Heart left ventricle (tissue), 16 donors: ENCODE measurements at regions of chr11 and their contacts with region 1.

Region 1: DNA sequence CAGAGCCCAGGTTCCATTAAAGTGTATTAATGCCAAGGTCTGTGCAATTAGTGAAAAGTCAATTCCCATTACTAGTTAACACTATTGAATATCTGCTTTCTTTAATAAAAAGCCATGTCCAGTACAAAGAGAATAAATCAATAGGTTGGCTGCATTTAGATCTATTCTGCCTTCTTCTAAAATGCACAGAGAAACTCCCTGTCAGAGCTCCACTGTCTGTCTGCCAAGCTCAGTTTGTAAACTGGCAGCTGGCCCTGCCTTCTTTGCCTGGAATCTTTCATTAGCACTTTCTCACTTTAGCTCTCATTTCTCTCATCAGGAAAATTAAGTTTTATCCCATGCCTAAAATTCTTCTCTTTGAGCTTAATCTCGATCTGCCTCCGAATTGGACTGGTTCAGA is 35.6 kb downstream of the ARL14EP start:
- DNase-seq: peak in 2 of 5 donors; percentile 19 to 33
- ATAC-seq: peak; percentile 27 to 60 (median 56)
- H3K4me3 ChIP-seq: no peak overlapping the region
- H3K27ac ChIP-seq: peak overlapping the region in 1 of 12 donors; percentile 2
- H3K4me1 ChIP-seq: peaks cover 0 to 11% (median 0%) of the 10 kb centered on the region in 12 donors
- H3K27me3 ChIP-seq: no peaks in the 10 kb centered on the region
- CTCF ChIP-seq: no peak
- POLR2A ChIP-seq: no peak

Region 2: GRCh38 chr11:30406978-30407762 is 48.6 kb after region 1 on chr11:
- intact Hi-C with region 1: loop called in 1 of 10 experiments (anchors 5 kb)
- DNase-seq: peak in 2 of 5 donors; percentile 38 to 40
- ATAC-seq: peak; percentile 85 to 98 (median 94)
- H3K4me3 ChIP-seq: no peak overlapping the region
- H3K27ac ChIP-seq: no peak overlapping the region
- H3K4me1 ChIP-seq: peaks cover 0 to 16% (median 0%) of the 10 kb centered on the region in 12 donors
- H3K27me3 ChIP-seq: no peaks in the 10 kb centered on the region
- CTCF ChIP-seq: no peak
- POLR2A ChIP-seq: no peak

Region 3: DNA sequence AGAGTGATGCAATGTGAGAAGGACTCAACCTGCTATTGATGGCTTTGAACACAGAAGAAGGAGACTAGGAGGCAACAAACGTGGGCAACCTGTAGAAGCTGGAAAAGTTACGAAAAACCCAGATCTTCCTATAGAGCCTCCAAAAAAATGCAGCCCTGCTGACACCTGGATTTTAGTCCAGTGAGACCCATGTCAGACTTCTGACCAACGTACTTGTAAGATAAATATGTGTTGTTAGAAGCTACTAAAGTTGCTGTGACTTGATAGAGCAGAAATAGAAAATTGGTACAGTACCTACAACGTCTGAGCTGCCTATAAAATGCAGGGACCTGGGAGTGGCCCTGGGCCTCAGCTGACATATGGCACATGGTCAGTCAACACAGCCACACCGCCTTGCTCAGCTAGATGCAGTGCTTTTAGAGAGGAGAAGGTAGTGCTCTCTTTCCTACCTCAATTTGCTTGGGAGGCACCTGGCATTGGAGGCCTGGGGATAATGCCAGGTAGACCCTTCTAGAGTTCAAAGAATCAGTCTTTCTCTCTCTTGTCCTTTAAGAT is 61.8 kb after region 1 on chr11:
- intact Hi-C with region 1: no loop called
- DNase-seq: no peak
- ATAC-seq: no peak
- H3K4me3 ChIP-seq: no peak overlapping the region
- H3K27ac ChIP-seq: no peak overlapping the region
- H3K4me1 ChIP-seq: peaks cover 0 to 14% (median 0%) of the 10 kb centered on the region in 12 donors
- H3K27me3 ChIP-seq: no peaks in the 10 kb centered on the region
- CTCF ChIP-seq: no peak
- POLR2A ChIP-seq: no peak

Region 4: GRCh38 chr11:30653606-30654005 is 295.1 kb after region 1 on chr11:
- intact Hi-C with region 1: loop called in 1 of 10 experiments (anchors 10 kb)
- DNase-seq: no peak
- ATAC-seq: no peak
- H3K4me3 ChIP-seq: no peak overlapping the region
- H3K27ac ChIP-seq: no peak overlapping the region
- H3K4me1 ChIP-seq: no peaks in the 10 kb centered on the region
- H3K27me3 ChIP-seq: no peaks in the 10 kb centered on the region
- CTCF ChIP-seq: peak in 3 of 12 donors; percentile 34 to 41 (median 36)
- POLR2A ChIP-seq: no peak

Region 5: GRCh38 chr11:30855383-30856006 is 497.0 kb after region 1 on chr11:
- intact Hi-C with region 1: loop called in 1 of 10 experiments (anchors 2 kb)
- DNase-seq: no peak
- ATAC-seq: no peak
- H3K4me3 ChIP-seq: no peak overlapping the region
- H3K27ac ChIP-seq: no peak overlapping the region
- H3K4me1 ChIP-seq: peaks cover 0 to 4% (median 0%) of the 10 kb centered on the region in 12 donors
- H3K27me3 ChIP-seq: no peaks in the 10 kb centered on the region
- CTCF ChIP-seq: peak in 11 of 12 donors; percentile 32 to 73 (median 59)
- POLR2A ChIP-seq: no peak